ENCODE measurements at regions of chr6 and their contacts with region 1.

Region 1: GRCh38 chr6:169701954-169702839 is at the starts of genes C6orf120 and WDR27:
- DNase-seq: peak; percentile 86 to 87
- H3K4me3 ChIP-seq: peak within 1 kb of the TSS; percentile 91
- H3K27ac ChIP-seq: peak within 1 kb of the TSS; percentile 76
- H3K4me1 ChIP-seq: peaks cover 28% of the 10 kb centered on the region
- H3K27me3 ChIP-seq: no peaks in the 10 kb centered on the region
- CTCF ChIP-seq: no peak
- total RNA-seq, gene C6orf120: 9.8 and 12.5 TPM in 2 replicates
- total RNA-seq, gene WDR27: 54.2 and 66.5 TPM in 2 replicates

Region 2: DNA sequence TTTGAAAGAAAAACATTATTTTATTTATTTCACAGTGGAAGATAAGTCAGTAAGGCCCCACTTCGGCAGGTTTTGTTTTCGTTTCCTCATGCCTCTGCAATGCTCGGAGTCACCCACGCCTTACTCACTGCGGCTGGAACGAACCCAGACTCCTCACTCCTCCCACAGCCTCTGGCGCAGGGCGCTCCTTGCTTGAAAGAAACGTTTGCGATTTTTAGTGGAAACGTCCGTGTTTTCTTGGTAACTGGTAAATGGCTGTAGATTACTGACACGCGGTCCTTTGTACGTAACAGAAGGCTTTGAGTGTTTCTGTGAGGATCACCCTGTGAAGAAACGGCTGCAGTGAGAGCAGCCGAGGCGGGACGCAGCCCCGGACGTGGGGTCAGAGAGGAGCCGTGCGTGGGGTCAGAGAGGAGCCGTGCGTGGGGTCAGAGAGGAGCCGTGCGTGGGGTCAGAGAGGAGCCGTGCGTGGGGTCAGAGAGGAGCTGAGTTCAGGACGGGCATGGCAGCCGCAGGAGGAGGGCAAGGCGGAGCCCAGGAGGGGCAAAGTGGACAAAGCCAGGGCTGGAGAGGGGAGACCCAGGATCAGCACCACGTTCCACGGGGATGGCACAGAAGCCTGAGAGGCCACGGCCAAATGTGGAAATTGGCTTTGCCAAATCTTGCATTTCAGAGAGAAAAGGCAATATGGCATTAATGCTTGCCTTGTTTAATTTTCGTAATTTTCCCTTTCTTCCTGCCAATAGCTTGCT is 249.9 kb before region 1 on chr6:
- CTCF ChIA-PET with region 1: no interaction called
- POLR2A ChIA-PET with region 1: no interaction called
- intact Hi-C with region 1: loop called (anchors 10 kb)
- DNase-seq: peak; percentile 52 to 70
- H3K4me3 ChIP-seq: peak overlapping the region; percentile 55; the same call in 1 of the 2 replicates
- H3K27ac ChIP-seq: no peak overlapping the region
- H3K4me1 ChIP-seq: no peaks in the 10 kb centered on the region
- H3K27me3 ChIP-seq: no peaks in the 10 kb centered on the region
- CTCF ChIP-seq: no peak

Region 3: GRCh38 chr6:169723200-169723909 is 21.2 kb after region 1 on chr6:
- CTCF ChIA-PET with region 1: no interaction called
- POLR2A ChIA-PET with region 1: no interaction called
- intact Hi-C with region 1: loop called (anchors 1 kb)
- DNase-seq: peak; percentile 36 to 39
- H3K4me3 ChIP-seq: peak overlapping the region; percentile 74
- H3K27ac ChIP-seq: peak overlapping the region; percentile 34
- H3K4me1 ChIP-seq: peaks cover 34% of the 10 kb centered on the region
- H3K27me3 ChIP-seq: no peaks in the 10 kb centered on the region
- CTCF ChIP-seq: no peak

Region 4: DNA sequence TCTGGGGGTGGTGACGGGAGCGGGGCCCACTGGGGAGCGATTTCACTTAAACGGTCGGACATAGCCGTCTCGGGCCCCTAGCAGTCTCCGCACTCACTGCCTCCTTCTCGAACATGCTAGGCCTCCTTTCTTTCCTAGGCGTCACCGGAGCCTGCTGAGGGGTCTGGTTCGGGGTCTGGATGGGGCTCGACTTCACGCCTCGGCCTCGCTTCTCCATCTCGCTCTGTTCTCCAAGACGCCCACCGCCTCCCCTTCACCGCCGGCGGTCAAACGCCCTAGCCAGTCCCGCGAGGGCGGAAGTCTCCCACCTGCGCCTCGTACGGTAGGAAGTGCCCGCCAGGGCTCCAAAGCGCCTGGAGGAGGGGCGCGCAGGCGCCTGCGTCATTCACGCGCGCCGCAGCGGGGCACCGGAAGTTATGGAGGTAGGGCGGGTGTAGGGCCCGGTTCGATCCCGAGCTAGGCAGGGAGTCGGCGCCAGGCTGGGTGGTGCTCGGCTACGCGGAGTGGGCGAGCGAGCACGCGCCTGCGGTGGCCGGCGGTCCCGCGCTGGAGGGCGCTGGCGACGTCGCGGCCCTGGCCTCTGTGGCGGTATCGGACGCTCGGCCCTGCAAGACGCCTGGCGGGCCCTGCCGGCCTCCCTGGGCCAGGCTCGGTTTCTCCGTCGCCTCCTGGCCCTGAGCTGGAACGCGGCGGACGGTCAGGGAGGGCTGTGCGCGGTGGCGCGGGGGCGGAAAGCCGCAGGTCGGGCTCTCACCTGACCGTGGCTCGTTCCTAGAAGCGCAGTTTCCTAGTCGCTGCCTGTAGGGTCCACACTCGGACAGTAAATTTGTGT is 49.3 kb after region 1 on chr6 and contains the starts of genes DYNLT2 and ERMARD:
- CTCF ChIA-PET with region 1: no interaction called
- POLR2A ChIA-PET with region 1: no interaction called
- intact Hi-C with region 1: loop called (anchors 1 kb)
- DNase-seq: peak; percentile 74 to 87
- H3K4me3 ChIP-seq: peak within 1 kb of the TSS; percentile 82
- H3K27ac ChIP-seq: peak within 1 kb of the TSS; percentile 81
- H3K4me1 ChIP-seq: peaks cover 14% of the 10 kb centered on the region
- H3K27me3 ChIP-seq: no peaks in the 10 kb centered on the region
- CTCF ChIP-seq: no peak
- total RNA-seq, gene DYNLT2: 1.4 and 1.5 TPM in 2 replicates
- total RNA-seq, gene ERMARD: 19.3 and 28.2 TPM in 2 replicates

Region 5: DNA sequence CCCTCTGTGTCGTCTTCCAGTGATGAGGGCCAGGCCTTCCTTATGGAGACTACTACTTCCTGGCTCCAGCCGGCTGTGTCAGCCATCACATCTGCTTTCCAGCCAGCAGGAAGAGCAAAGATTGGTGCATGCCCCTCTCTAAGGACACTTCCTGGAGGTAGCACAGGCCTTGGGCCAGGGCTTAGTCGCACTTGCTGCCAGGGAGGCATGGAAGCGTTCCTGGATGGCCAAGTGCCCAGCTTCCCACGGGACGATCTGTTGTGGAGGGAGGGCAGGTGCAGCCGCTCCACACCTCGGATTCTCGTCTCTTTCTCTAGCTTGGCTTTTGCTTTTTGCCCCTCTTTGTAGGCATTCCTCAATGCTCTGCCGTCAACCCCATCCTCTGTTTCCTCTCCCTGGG is 61.1 kb after region 1 on chr6:
- CTCF ChIA-PET with region 1: no interaction called
- POLR2A ChIA-PET with region 1: no interaction called
- intact Hi-C with region 1: no loop called
- DNase-seq: no peak
- H3K4me3 ChIP-seq: no peak overlapping the region
- H3K27ac ChIP-seq: no peak overlapping the region
- H3K4me1 ChIP-seq: no peaks in the 10 kb centered on the region
- H3K27me3 ChIP-seq: no peaks in the 10 kb centered on the region
- CTCF ChIP-seq: no peak